Psoas muscle (tissue), 8 donors: ENCODE measurements at regions of chr7 and their contacts with region 1.

Region 1: GRCh38 chr7:29806208-29806994 is at the start of gene WIPF3:
- DNase-seq: peak; percentile 48 to 66
- ATAC-seq: peak; percentile 73 to 81 (median 75)
- H3K4me3 ChIP-seq: peak within 1 kb of the TSS; percentile 80
- H3K27ac ChIP-seq: peak within 1 kb of the TSS; percentile 91
- H3K4me1 ChIP-seq: peaks cover 17% of the 10 kb centered on the region
- H3K27me3 ChIP-seq: no peaks in the 10 kb centered on the region
- CTCF ChIP-seq: peak; percentile 8
- total RNA-seq, gene WIPF3: 18.5 to 30.7 (median 23.8) TPM

Region 2: GRCh38 chr7:29764227-29764626 is 42.2 kb before region 1 on chr7:
- intact Hi-C with region 1: loop called (anchors 5 to 10 kb)
- DNase-seq: no peak
- ATAC-seq: peak; percentile 56 to 84 (median 76)
- H3K4me3 ChIP-seq: no peak overlapping the region
- H3K27ac ChIP-seq: no peak overlapping the region
- H3K4me1 ChIP-seq: peaks cover 9% of the 10 kb centered on the region
- H3K27me3 ChIP-seq: no peaks in the 10 kb centered on the region
- CTCF ChIP-seq: peak; percentile 20

Region 3: GRCh38 chr7:29859524-29860185 is 53.3 kb after region 1 on chr7:
- intact Hi-C with region 1: loop called (anchors 5 kb)
- DNase-seq: no peak
- ATAC-seq: no peak
- H3K4me3 ChIP-seq: no peak overlapping the region
- H3K27ac ChIP-seq: peak overlapping the region; percentile 88
- H3K4me1 ChIP-seq: peaks cover 59% of the 10 kb centered on the region
- H3K27me3 ChIP-seq: no peaks in the 10 kb centered on the region
- CTCF ChIP-seq: no peak

Region 4: DNA sequence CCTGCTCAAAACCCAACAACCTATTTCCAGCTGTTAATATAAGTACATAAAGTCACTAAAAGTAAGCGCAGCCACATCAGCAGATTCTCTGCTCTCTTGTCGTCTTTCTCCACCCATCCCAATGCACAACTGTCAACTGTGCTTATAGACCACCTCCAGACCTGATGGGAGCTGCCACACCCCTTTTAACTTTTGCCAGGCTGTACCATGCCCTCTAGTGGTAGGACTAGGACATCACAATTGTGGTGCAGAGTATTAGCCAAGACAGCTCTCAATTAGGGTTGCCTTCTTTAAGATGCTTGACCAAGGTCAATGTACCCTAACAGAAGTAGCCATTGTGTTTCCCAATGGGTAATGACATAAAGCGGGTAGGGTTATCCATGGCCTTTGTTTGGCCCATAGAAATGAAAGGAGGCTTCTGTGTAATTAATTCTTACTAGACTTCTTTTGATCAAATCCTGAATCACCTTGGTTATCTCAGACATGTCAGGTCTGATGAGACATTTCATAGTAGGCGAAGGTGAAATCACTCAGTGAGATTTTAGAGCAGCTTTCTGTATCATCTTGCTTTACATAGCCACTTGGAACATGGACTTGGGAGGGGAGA is 115.1 kb after region 1 on chr7:
- intact Hi-C with region 1: loop called in 1 of 2 experiments (anchors 5 kb)
- DNase-seq: no peak
- ATAC-seq: peak; percentile 87 to 95 (median 88)
- H3K4me3 ChIP-seq: no peak overlapping the region
- H3K27ac ChIP-seq: no peak overlapping the region
- H3K4me1 ChIP-seq: no peaks in the 10 kb centered on the region
- H3K27me3 ChIP-seq: no peaks in the 10 kb centered on the region
- CTCF ChIP-seq: peak; percentile 89